CD14-positive monocyte (primary cell): ENCODE measurements at regions of chr6 and their contacts with region 1.

Region 1: DNA sequence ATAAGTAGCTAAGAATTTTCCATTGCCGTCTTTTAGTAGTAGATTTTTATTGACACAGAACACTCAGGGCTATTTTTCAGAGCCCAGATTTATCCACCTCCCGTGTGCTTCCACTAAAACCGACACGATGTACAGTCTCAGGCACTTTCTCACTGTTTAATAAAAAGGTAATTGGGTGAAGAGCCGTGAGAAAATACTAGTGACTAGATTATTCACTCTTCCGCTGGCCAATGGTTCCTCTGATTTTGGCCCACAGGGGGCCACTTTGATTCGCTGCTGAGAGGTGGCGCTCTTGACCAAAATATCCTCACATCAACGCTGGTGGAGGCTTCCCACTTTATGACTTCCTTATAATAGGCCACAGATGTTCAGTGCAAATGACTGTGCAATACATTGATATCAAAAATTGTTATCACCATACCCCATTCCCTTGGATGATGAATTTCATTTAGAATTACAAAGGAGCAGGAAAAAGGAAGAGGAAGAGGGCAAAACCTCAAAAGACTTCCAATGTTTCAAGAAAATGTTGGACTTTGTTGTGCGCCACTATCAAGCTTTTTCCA is 12.3 kb upstream of the HDDC2 start:
- DNase-seq: peak; percentile 47 to 62 (median 54)
- H3K4me3 ChIP-seq: no peak overlapping the region
- H3K4me3 Mint-ChIP-seq: no peak overlapping the region
- H3K27ac ChIP-seq: no peak overlapping the region
- H3K27ac Mint-ChIP-seq: no peak overlapping the region
- H3K4me1 ChIP-seq: no peaks in the 10 kb centered on the region
- H3K4me1 Mint-ChIP-seq: no peaks in the 10 kb centered on the region
- H3K27me3 ChIP-seq: peaks cover 11 to 30% of the 10 kb centered on the region in 2 donors
- H3K27me3 Mint-ChIP-seq: peaks cover 7 to 18% (median 14%) of the 10 kb centered on the region in 3 donors
- CTCF ChIP-seq: peak; percentile 69

Region 2: GRCh38 chr6:125273965-125274364 is 40.1 kb before region 1 on chr6:
- intact Hi-C with region 1: no loop called
- DNase-seq: no peak
- H3K4me3 ChIP-seq: no peak overlapping the region
- H3K4me3 Mint-ChIP-seq: no peak overlapping the region
- H3K27ac ChIP-seq: no peak overlapping the region
- H3K27ac Mint-ChIP-seq: peak overlapping the region in 1 of 7 donors; percentile 20
- H3K4me1 ChIP-seq: no peaks in the 10 kb centered on the region
- H3K4me1 Mint-ChIP-seq: no peaks in the 10 kb centered on the region
- H3K27me3 ChIP-seq: no peaks in the 10 kb centered on the region
- H3K27me3 Mint-ChIP-seq: no peaks in the 10 kb centered on the region
- CTCF ChIP-seq: no peak

Region 3: GRCh38 chr6:125301435-125302391 is 12.4 kb before region 1 on chr6 and contains the start of gene HDDC2:
- intact Hi-C with region 1: no loop called
- DNase-seq: peak; percentile 42 to 69 (median 60)
- H3K4me3 ChIP-seq: peak within 1 kb of the TSS; percentile 66 to 93 (median 85)
- H3K4me3 Mint-ChIP-seq: peak within 1 kb of the TSS; percentile 87 to 95
- H3K27ac ChIP-seq: peak within 1 kb of the TSS; percentile 64 to 78
- H3K27ac Mint-ChIP-seq: peak within 1 kb of the TSS; percentile 71 to 95 (median 88)
- H3K4me1 ChIP-seq: peaks cover 15 to 17% of the 10 kb centered on the region in 2 donors
- H3K4me1 Mint-ChIP-seq: peaks cover 31% of the 10 kb centered on the region
- H3K27me3 ChIP-seq: peaks cover 0 to 3% of the 10 kb centered on the region in 2 donors
- H3K27me3 Mint-ChIP-seq: peaks cover 3 to 7% (median 6%) of the 10 kb centered on the region in 3 donors
- CTCF ChIP-seq: no peak
- polyA plus RNA-seq, gene HDDC2: 24.4 to 59.9 (median 42.6) TPM

Region 4: GRCh38 chr6:125346201-125346925 is 32.3 kb after region 1 on chr6:
- intact Hi-C with region 1: no loop called
- DNase-seq: no peak
- H3K4me3 ChIP-seq: peak overlapping the region in 1 of 3 experiments; percentile 19
- H3K4me3 Mint-ChIP-seq: peak overlapping the region in 1 of 2 donors; percentile 42
- H3K27ac ChIP-seq: no peak overlapping the region
- H3K27ac Mint-ChIP-seq: peak overlapping the region in 1 of 7 donors; percentile 59
- H3K4me1 ChIP-seq: peaks cover 11 to 13% of the 10 kb centered on the region in 2 donors
- H3K4me1 Mint-ChIP-seq: no peaks in the 10 kb centered on the region
- H3K27me3 ChIP-seq: no peaks in the 10 kb centered on the region
- H3K27me3 Mint-ChIP-seq: peaks cover 0 to 1% (median 0%) of the 10 kb centered on the region in 3 donors
- CTCF ChIP-seq: no peak

Region 5: GRCh38 chr6:125753218-125753936 is 439.3 kb after region 1 on chr6:
- intact Hi-C with region 1: loop called in 1 of 2 experiments (anchors 5 kb)
- DNase-seq: peak in 2 of 3 donors; percentile 11 to 20
- H3K4me3 ChIP-seq: no peak overlapping the region
- H3K4me3 Mint-ChIP-seq: peak overlapping the region in 1 of 2 donors; percentile 73
- H3K27ac ChIP-seq: no peak overlapping the region
- H3K27ac Mint-ChIP-seq: no peak overlapping the region
- H3K4me1 ChIP-seq: peaks cover 21 to 25% of the 10 kb centered on the region in 2 donors
- H3K4me1 Mint-ChIP-seq: peaks cover 19% of the 10 kb centered on the region
- H3K27me3 ChIP-seq: peaks cover 78 to 85% of the 10 kb centered on the region in 2 donors
- H3K27me3 Mint-ChIP-seq: peaks cover 57 to 73% (median 65%) of the 10 kb centered on the region in 3 donors
- CTCF ChIP-seq: peak; percentile 56

Region 6: GRCh38 chr6:125765944-125766343 is 451.8 kb after region 1 on chr6:
- intact Hi-C with region 1: loop called in 1 of 2 experiments (anchors 5 kb)
- DNase-seq: no peak
- H3K4me3 ChIP-seq: no peak overlapping the region
- H3K4me3 Mint-ChIP-seq: peak overlapping the region in 1 of 2 donors; percentile 26
- H3K27ac ChIP-seq: no peak overlapping the region
- H3K27ac Mint-ChIP-seq: no peak overlapping the region
- H3K4me1 ChIP-seq: no peaks in the 10 kb centered on the region
- H3K4me1 Mint-ChIP-seq: peaks cover 4% of the 10 kb centered on the region
- H3K27me3 ChIP-seq: peaks cover 31 to 36% of the 10 kb centered on the region in 2 donors
- H3K27me3 Mint-ChIP-seq: peaks cover 24 to 48% (median 27%) of the 10 kb centered on the region in 3 donors
- CTCF ChIP-seq: no peak

Region 7: DNA sequence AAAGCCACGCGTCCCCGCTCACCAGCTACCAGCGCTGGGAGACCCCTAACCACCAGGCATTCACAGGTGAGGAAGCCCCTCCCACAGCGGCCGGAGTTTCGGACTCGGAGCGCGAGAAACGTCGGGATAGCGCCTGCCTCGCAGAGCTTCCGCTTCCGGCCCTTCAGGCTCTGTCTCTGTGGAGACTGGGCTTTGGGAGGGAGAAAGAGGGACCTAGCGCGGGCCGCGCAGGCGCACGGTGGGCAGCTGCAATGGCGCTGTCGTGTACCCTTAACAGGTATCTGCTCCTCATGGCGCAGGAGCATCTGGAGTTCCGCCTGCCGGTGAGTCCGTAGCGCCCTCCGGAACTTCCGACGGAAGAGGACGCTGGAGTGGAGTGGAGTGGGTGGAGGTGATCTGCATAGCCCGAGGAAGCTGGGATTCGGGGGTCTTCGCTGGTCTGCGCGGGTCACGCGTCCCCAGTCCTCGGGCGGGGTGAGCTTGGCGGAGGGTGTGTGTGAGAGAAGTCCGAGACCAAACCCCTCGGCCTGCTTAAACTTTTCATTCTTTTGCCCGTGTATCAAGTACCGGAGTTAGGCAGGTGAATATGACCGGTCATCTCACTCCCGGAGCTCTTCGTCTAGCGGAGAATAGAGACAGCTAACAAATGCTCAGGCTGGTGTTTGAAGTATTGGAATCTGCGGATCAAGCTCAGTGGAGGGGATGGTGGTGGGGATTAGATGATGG is 672.4 kb after region 1 on chr6 and contains the start of gene TRMT11:
- intact Hi-C with region 1: loop called in 1 of 2 experiments (anchors 10 kb)
- DNase-seq: peak; percentile 56 to 74 (median 71)
- H3K4me3 ChIP-seq: peak within 1 kb of the TSS; percentile 87 to 88 (median 88)
- H3K4me3 Mint-ChIP-seq: no peak within 1 kb of the TSS
- H3K27ac ChIP-seq: peak within 1 kb of the TSS in 1 of 2 donors; percentile 56
- H3K27ac Mint-ChIP-seq: peak within 1 kb of the TSS in 1 of 7 donors; percentile 25
- H3K4me1 ChIP-seq: peaks cover 15 to 16% of the 10 kb centered on the region in 2 donors
- H3K4me1 Mint-ChIP-seq: peaks cover 8% of the 10 kb centered on the region
- H3K27me3 ChIP-seq: no peaks in the 10 kb centered on the region
- H3K27me3 Mint-ChIP-seq: no peaks in the 10 kb centered on the region
- CTCF ChIP-seq: no peak
- polyA plus RNA-seq, gene TRMT11: 2.1 to 3.3 (median 2.1) TPM